Activated CD4-positive, alpha-beta T cell treated with anti-CD3 and anti-CD28 coated beads, Interleukin-2, amount 10 ng/mL, durations not matched to agents 24 days and 14 days (primary cell): ENCODE measurements at regions of chr7 and their contacts with region 1.

Region 1: GRCh38 chr7:12686894-12687717 is at the start of gene ARL4A:
- DNase-seq: peak; percentile 97
- H3K4me3 Mint-ChIP-seq: peak within 1 kb of the TSS; percentile 91
- H3K27ac Mint-ChIP-seq: peak within 1 kb of the TSS; percentile 98
- H3K4me1 Mint-ChIP-seq: peaks cover 27% of the 10 kb centered on the region
- H3K27me3 Mint-ChIP-seq: no peaks in the 10 kb centered on the region
- total RNA-seq, gene ARL4A: 8.9 and 11.0 TPM in 2 replicates

Region 2: DNA sequence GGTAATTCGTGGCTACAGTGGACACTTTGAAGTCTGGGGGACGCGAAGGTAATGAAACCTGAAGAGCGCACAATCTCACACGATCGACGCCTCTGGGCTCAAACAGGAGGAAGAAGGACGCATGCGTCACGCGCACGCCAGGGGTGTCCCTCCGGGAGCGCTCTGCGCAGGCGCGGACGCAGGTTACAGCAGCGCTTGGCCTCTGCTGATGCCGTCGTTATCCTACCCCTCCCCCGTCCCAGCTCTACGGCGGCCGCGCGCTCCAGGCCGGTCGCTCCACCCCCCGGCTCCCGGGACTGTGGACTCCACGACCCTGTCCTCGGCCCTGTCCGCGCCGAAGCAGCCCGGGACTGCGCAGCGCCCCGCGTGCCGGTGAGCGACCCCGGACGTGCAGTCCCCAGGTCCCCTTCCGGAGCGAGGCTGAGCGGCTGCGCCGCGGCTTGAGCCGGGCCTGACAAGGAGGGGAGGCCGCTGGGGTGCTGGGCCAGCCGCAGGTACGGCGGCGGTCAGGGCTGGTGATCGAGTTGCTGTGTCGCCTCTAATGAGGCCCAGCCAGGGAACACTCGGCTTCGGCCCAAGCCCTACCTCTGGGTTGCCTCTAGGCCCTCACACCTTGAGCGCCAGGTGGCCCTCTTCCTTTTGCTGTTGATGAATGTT is 475.9 kb before region 1 on chr7 and contains the start of gene TMEM106B:
- intact Hi-C with region 1: loop called (anchors 1 kb)
- DNase-seq: peak; percentile 99
- H3K4me3 Mint-ChIP-seq: peak within 1 kb of the TSS; percentile 94
- H3K27ac Mint-ChIP-seq: peak within 1 kb of the TSS; percentile 91
- H3K4me1 Mint-ChIP-seq: peaks cover 29% of the 10 kb centered on the region
- H3K27me3 Mint-ChIP-seq: peaks cover 33% of the 10 kb centered on the region
- total RNA-seq, gene TMEM106B: 24.0 and 25.5 TPM in 2 replicates

Region 3: GRCh38 chr7:12403287-12404181 is 283.6 kb before region 1 on chr7 and contains the start of gene VWDE:
- intact Hi-C with region 1: loop called (anchors 5 kb)
- DNase-seq: peak; percentile 87
- H3K4me3 Mint-ChIP-seq: peak within 1 kb of the TSS; percentile 93
- H3K27ac Mint-ChIP-seq: peak within 1 kb of the TSS; percentile 80
- H3K4me1 Mint-ChIP-seq: peaks cover 18% of the 10 kb centered on the region
- H3K27me3 Mint-ChIP-seq: peaks cover 28% of the 10 kb centered on the region
- total RNA-seq, gene VWDE: 1.8 and 1.9 TPM in 2 replicates

Region 4: GRCh38 chr7:12549106-12549505 is 138.0 kb before region 1 on chr7:
- intact Hi-C with region 1: no loop called
- DNase-seq: no peak
- H3K4me3 Mint-ChIP-seq: no peak overlapping the region
- H3K27ac Mint-ChIP-seq: no peak overlapping the region
- H3K4me1 Mint-ChIP-seq: no peaks in the 10 kb centered on the region
- H3K27me3 Mint-ChIP-seq: no peaks in the 10 kb centered on the region

Region 5: DNA sequence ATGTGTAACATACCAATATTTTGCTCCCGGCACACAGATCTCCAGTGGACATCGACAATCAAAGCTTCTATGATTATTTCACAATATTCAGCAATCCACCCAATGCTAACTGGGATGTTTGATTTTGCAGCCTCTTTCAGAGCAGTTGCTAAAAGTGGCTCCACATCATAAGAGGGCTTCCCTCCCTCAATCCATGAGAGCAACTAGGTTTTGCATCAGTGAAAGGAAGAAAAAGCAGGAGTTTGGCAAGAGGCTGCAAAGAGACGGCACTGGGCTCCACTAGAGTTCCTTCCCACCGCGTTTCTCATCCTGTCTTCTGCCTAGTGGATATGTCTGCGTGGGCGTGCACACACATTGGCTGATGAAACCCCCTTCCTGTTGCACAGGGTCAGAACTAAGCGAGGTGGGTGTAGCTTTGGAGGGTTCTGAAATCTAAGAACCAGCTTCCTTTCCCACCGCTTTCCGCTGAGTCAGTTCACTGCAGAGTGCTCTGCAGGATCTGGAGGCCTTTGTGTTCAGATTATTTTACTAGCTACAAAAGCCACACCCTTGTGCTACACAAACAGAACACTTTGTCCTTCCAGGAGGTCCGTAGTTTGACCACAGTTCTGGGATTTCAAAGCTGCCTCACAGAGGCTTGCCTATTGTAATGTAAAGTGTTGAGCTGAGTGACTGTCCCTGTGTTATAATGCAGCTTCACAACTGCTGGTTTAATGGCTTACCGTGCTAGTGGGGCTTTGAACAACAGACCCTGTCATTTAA is 28.4 kb after region 1 on chr7:
- intact Hi-C with region 1: loop called (anchors 1 kb)
- DNase-seq: peak; percentile 77
- H3K4me3 Mint-ChIP-seq: peak overlapping the region; percentile 21
- H3K27ac Mint-ChIP-seq: peak overlapping the region; percentile 70
- H3K4me1 Mint-ChIP-seq: peaks cover 33% of the 10 kb centered on the region
- H3K27me3 Mint-ChIP-seq: no peaks in the 10 kb centered on the region

Region 6: GRCh38 chr7:12888717-12889116 is 201.6 kb after region 1 on chr7:
- intact Hi-C with region 1: loop called (anchors 10 kb)
- DNase-seq: no peak
- H3K4me3 Mint-ChIP-seq: no peak overlapping the region
- H3K27ac Mint-ChIP-seq: no peak overlapping the region
- H3K4me1 Mint-ChIP-seq: no peaks in the 10 kb centered on the region
- H3K27me3 Mint-ChIP-seq: no peaks in the 10 kb centered on the region